Tibial artery (tissue), 4 donors: ENCODE measurements at regions of chr12 and their contacts with region 1.

Region 1: GRCh38 chr12:86623267-86623666 is 367.1 kb upstream of the MGAT4C start:
- DNase-seq: no peak
- H3K4me3 ChIP-seq: no peak overlapping the region
- H3K27ac ChIP-seq: no peak overlapping the region
- H3K4me1 ChIP-seq: no peaks in the 10 kb centered on the region
- H3K27me3 ChIP-seq: no peaks in the 10 kb centered on the region
- CTCF ChIP-seq: no peak

Region 2: DNA sequence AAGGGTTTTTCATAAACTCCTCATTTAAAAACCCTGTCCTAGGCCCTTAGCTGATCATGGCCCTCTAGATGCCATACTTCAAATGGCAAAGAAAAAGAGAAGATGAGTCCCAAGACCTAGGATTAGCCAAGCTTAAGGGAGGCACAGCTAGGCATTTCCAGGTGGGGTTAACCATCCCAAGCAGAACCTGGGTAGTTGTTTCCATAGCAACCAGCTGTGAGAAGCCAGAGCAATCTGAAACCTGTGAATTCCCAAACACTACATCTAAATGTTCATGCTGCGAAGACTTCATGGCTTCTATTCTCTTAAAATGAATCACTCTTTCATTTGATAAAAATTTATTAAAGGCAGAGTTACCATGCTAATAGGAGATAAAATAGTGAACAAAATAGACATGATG is 1033.0 kb after region 1 on chr12:
- intact Hi-C with region 1: loop called (anchors 10 kb)
- DNase-seq: no peak
- H3K4me3 ChIP-seq: no peak overlapping the region
- H3K27ac ChIP-seq: no peak overlapping the region
- H3K4me1 ChIP-seq: peaks cover 0 to under 1% (median 0%) of the 10 kb centered on the region in 4 donors
- H3K27me3 ChIP-seq: no peaks in the 10 kb centered on the region
- CTCF ChIP-seq: no peak